ENCODE measurements at regions of chr1 and their contacts with region 1.

Region 1: DNA sequence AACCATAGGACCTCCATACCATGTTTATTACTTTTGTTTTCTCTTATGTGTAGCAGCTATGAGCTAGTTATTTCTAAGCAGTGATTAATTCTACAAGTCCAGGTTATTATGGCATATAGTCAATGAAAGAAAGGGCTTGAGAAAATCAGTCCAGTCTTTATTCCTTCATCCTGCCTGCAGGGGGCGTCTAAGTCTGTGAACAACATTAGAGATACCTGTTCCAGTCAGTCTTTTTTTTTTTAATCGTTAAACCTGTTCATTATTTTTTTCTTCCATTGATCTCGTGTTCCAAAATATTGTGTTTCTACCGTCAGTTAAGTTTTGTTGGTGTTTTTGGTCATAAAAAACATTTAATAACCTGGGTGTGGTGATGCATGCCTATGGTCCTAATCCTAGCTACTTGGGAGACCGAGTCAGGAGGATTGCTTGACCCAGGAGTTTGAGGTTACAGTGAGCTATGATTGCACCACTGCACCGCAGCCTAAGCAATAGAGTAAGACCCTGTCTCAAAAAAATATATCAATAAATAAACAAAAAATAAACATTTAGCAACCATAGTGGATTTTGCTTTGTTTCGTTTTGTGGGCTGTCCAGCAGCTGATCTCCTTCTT is 29.4 kb upstream of the CD2 start:
- DNase-seq: no peak
- H3K4me3 ChIP-seq: no peak overlapping the region
- CTCF ChIP-seq: no peak
- POLR2A ChIP-seq: no peak

Region 2: DNA sequence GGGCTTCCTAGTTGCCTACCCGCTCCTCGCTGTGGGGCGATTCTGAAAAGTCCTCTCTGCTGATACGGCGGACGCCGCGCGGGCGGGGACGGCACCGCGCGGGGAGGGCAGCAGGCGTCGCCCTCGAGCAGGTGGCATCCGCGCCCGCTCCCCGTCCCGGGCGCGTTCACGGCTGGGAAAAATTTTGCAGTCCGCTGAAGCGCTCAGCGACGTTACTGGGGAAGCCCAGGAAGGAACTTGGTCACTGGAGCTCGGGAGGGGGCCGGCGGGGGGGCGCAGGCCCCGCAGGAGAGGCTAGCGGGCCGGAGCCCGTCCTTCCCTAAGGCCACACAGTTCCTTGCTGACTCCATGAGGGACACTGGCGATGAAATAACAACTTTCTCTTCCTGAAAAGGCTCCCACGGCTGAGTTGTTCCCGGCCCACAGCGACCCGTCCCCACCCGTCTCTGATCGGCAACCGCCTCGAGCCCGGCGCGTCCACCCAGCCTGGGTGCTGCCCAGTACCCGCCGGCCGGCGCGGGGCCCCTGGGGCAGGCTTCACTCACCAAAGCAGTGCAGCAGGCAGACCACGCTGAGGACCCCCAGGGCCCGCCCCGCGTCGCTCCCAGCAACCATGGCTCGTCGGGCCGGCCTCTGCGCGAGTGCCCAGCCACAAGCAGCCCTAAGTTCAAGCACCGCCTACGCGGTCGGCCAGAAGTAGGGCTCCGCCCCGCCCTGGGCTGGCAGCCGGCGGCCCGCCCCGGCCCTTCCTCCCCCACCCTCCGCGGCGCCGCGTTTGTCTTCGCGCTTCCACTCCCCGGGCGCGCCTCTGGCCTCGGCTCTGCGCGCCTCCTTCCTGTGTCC is 154.3 kb before region 1 on chr1 and contains the start of gene CD58:
- intact Hi-C with region 1: loop called (anchors 5 kb)
- DNase-seq: peak; percentile 83 to 97
- H3K4me3 ChIP-seq: peak within 1 kb of the TSS; percentile 85
- CTCF ChIP-seq: no peak
- POLR2A ChIP-seq: peak in 1 of 2 donors; percentile 9
- total RNA-seq, gene CD58: 25.3 to 40.9 (median 28.9) TPM

Measured in lower leg skin (tissue), 4 donors.